ENCODE measurements at regions of chr3 and their contacts with region 1.

Region 1: GRCh38 chr3:108662130-108662738 is 72.7 kb downstream of the DZIP3 start:
- DNase-seq: peak in 1 of 2 donors; percentile 14
- ATAC-seq: peak; percentile 90 to 94
- H3K4me3 ChIP-seq: no peak overlapping the region
- H3K27ac ChIP-seq: no peak overlapping the region
- H3K4me1 ChIP-seq: peaks cover 9 to 22% of the 10 kb centered on the region in 2 donors
- H3K27me3 ChIP-seq: no peaks in the 10 kb centered on the region
- CTCF ChIP-seq: peak; percentile 57 to 80 (median 67)
- POLR2A ChIP-seq: no peak

Region 2: DNA sequence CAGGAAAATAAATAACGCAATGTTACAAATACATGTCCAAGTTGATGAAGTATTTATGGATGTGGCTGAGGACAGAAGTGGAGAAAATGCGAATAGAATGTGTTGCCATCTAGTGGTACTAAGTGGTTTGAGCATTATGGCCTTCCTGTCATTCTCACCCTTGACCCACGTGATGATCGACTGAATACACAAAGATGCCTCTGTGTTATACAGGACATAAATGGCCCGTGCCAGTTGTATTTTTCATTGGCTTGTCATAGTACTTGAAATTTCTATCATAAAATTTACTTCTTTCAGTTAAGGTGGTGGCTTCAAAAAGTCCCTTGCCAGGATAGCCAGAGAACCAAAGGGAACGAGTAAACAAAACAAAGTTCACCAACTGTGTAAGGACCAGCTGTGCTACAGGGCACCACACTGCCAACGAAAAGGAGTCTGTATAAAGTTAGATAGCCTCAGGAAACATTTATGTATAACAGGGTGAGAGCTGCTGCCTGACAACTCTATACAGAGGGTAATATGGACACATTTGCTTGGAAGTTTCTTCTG is 255.5 kb before region 1 on chr3:
- in situ Hi-C with region 1: no loop called
- intact Hi-C with region 1: no loop called
- DNase-seq: no peak
- ATAC-seq: peak in 1 of 2 donors; percentile 56
- H3K4me3 ChIP-seq: no peak overlapping the region
- H3K27ac ChIP-seq: no peak overlapping the region
- H3K4me1 ChIP-seq: no peaks in the 10 kb centered on the region
- H3K27me3 ChIP-seq: no peaks in the 10 kb centered on the region
- CTCF ChIP-seq: peak in 1 of 5 experiments; percentile 56
- POLR2A ChIP-seq: no peak

Region 3: GRCh38 chr3:108914774-108915641 is 252.8 kb after region 1 on chr3:
- in situ Hi-C with region 1: loop called in 2 of 4 experiments (anchors 5 to 10 kb)
- intact Hi-C with region 1: loop called (anchors 1 kb)
- DNase-seq: no peak
- ATAC-seq: peak in 1 of 2 donors; percentile 68
- H3K4me3 ChIP-seq: no peak overlapping the region
- H3K27ac ChIP-seq: no peak overlapping the region
- H3K4me1 ChIP-seq: no peaks in the 10 kb centered on the region
- H3K27me3 ChIP-seq: no peaks in the 10 kb centered on the region
- CTCF ChIP-seq: peak; percentile 48 to 74 (median 60)
- POLR2A ChIP-seq: no peak

Region 4: DNA sequence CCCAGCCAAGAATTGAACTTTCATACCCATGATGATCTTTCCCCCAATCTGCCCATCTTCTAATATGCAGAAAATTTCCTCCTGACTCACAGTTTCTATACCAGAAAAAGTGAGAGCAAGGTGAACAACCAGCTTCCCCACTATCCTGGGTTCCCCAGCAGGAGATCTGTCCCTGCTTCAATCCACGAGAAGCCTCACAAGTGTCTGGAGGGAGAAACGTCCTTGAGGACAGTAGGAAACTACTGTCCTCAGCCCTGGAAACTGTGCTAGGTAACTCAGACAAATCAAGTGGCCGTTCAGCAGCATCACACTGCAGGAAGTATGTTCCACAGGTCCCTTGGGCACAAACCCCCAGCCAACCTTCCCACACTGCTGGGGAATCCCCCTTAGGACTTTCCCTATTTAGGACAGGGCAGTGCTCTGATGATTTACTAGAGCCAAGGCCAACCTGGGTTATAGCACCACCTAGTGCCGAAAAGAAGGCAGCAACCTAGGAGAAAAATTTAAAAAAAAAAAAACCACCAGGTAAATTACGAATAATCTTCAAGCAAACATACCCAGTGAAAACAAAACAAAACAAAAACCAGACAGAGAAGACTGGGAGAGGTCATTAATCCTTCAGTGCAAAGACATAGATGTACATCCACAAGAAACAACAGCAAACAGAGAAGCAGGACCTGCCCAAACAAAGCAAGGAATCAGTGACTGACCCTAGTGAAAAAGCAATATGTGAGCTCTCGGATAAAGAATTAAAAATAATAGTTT is 419.7 kb after region 1 on chr3:
- in situ Hi-C with region 1: loop called in 1 of 4 experiments (anchors 25 kb)
- intact Hi-C with region 1: loop called (anchors 5 kb)
- DNase-seq: no peak
- ATAC-seq: peak in 1 of 2 donors; percentile 70
- H3K4me3 ChIP-seq: no peak overlapping the region
- H3K27ac ChIP-seq: no peak overlapping the region
- H3K4me1 ChIP-seq: no peaks in the 10 kb centered on the region
- H3K27me3 ChIP-seq: no peaks in the 10 kb centered on the region
- CTCF ChIP-seq: peak; percentile 21 to 72 (median 49)
- POLR2A ChIP-seq: no peak

Region 5: GRCh38 chr3:110314512-110315114 is 1652.4 kb after region 1 on chr3:
- in situ Hi-C with region 1: loop called in 1 of 4 experiments (anchors 25 kb)
- intact Hi-C with region 1: loop called (anchors 10 kb)
- DNase-seq: no peak
- ATAC-seq: no peak
- H3K4me3 ChIP-seq: no peak overlapping the region
- H3K27ac ChIP-seq: no peak overlapping the region
- H3K4me1 ChIP-seq: no peaks in the 10 kb centered on the region
- H3K27me3 ChIP-seq: no peaks in the 10 kb centered on the region
- CTCF ChIP-seq: peak in 4 of 5 experiments; percentile 35 to 57 (median 46)
- POLR2A ChIP-seq: no peak

Measured in gastrocnemius medialis (tissue), 4 donors.